Activated B cell treated with CpG ODN at 0.5 μM for 24 hours (primary cell): ENCODE measurements at regions of chr2 and their contacts with region 1.

Region 1: GRCh38 chr2:99489761-99490622 is at the start of gene REV1:
- DNase-seq: peak; percentile 96
- ATAC-seq: peak; percentile 87
- H3K4me3 Mint-ChIP-seq: peak within 1 kb of the TSS; percentile 96
- H3K27ac Mint-ChIP-seq: peak within 1 kb of the TSS; percentile 93
- H3K4me1 Mint-ChIP-seq: peaks cover 35% of the 10 kb centered on the region
- H3K27me3 Mint-ChIP-seq: no peaks in the 10 kb centered on the region
- CTCF ChIP-seq: no peak
- total RNA-seq, gene REV1: 44.5 and 52.1 TPM in 2 replicates

Region 2: GRCh38 chr2:97663965-97664635 is 1825.9 kb before region 1 on chr2 and contains the start of gene ACTR1B:
- CTCF ChIA-PET with region 1: no interaction called
- POLR2A ChIA-PET with region 1: no interaction called
- intact Hi-C with region 1: loop called (anchors 5 kb)
- DNase-seq: peak; percentile 93
- ATAC-seq: peak; percentile 89
- H3K4me3 Mint-ChIP-seq: peak within 1 kb of the TSS; percentile 92
- H3K27ac Mint-ChIP-seq: peak within 1 kb of the TSS; percentile 91
- H3K4me1 Mint-ChIP-seq: peaks cover 28% of the 10 kb centered on the region
- H3K27me3 Mint-ChIP-seq: no peaks in the 10 kb centered on the region
- CTCF ChIP-seq: no peak
- total RNA-seq, gene ACTR1B: 55.0 and 55.9 TPM in 2 replicates

Region 3: DNA sequence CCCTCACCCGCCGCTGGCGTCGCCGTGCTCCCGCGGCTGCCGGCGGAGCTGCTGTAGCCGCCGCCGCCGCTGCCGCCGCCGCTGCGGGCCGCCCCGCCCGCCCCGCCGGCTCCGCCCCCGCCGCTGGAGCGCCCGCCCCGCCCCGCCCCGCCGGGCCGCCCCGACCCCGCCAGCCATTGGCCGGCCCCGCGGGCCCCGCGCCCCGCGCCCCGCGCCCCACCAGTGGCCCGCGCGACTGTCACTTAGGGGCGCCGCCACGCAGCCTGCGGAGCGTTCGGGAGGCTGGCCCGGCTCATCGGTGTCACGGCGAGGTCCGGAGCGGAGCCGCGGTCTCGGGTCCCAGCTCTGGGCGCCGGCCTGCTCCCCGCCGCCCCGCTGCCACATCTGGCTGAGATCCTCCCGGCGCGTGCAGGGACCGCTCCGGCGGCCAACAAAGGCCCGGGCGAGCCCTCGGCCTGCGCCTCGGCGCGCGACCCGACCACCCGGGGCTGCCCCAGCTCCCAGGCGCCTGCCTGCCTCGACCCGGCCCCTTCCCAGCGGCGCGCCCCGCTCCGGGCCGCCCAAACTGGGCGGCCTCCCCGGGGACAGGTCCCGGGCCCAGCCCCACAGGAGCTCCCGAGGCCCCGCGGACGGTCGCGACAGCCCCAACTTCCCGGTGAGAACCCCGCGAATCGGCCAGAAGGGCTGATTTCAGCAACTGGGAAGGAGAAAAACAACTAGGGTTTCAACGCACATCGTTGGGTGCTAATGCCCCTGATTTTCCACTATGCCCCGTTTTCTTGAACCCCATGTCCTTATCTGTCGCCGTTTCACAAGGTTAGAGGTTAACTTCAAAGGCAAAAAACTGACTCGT is 758.7 kb before region 1 on chr2 and contains the start of gene MGAT4A:
- CTCF ChIA-PET with region 1: no interaction called
- POLR2A ChIA-PET with region 1: no interaction called
- intact Hi-C with region 1: loop called (anchors 5 kb)
- DNase-seq: peak; percentile 76
- ATAC-seq: peak; percentile 87
- H3K4me3 Mint-ChIP-seq: peak within 1 kb of the TSS; percentile 83
- H3K27ac Mint-ChIP-seq: peak within 1 kb of the TSS; percentile 84
- H3K4me1 Mint-ChIP-seq: peaks cover 56% of the 10 kb centered on the region
- H3K27me3 Mint-ChIP-seq: no peaks in the 10 kb centered on the region
- CTCF ChIP-seq: no peak
- total RNA-seq, gene MGAT4A: 12.6 and 15.7 TPM in 2 replicates

Region 4: GRCh38 chr2:99141110-99142108 is 348.6 kb before region 1 on chr2 and contains the start of gene C2orf15:
- CTCF ChIA-PET with region 1: no interaction called
- POLR2A ChIA-PET with region 1: interaction called, 3 read pairs
- intact Hi-C with region 1: loop called (anchors 1 kb)
- DNase-seq: peak; percentile 96
- ATAC-seq: peak; percentile 88
- H3K4me3 Mint-ChIP-seq: peak within 1 kb of the TSS; percentile 97
- H3K27ac Mint-ChIP-seq: peak within 1 kb of the TSS; percentile 96
- H3K4me1 Mint-ChIP-seq: peaks cover 26% of the 10 kb centered on the region
- H3K27me3 Mint-ChIP-seq: no peaks in the 10 kb centered on the region
- CTCF ChIP-seq: no peak
- total RNA-seq, gene C2orf15: 0.69 and 1.2 TPM in 2 replicates

Region 5: GRCh38 chr2:99180755-99181623 is 309.0 kb before region 1 on chr2 and contains the starts of genes MITD1 and MRPL30:
- CTCF ChIA-PET with region 1: no interaction called
- POLR2A ChIA-PET with region 1: interaction called, 3 read pairs
- intact Hi-C with region 1: loop called (anchors 1 kb)
- DNase-seq: peak; percentile 83
- ATAC-seq: peak; percentile 94
- H3K4me3 Mint-ChIP-seq: peak within 1 kb of the TSS; percentile 99
- H3K27ac Mint-ChIP-seq: peak within 1 kb of the TSS; percentile 95
- H3K4me1 Mint-ChIP-seq: peaks cover 63% of the 10 kb centered on the region
- H3K27me3 Mint-ChIP-seq: no peaks in the 10 kb centered on the region
- CTCF ChIP-seq: no peak
- total RNA-seq, gene MITD1: 54.1 and 59.8 TPM in 2 replicates
- total RNA-seq, gene MRPL30: 18.6 and 21.4 TPM in 2 replicates

Region 6: GRCh38 chr2:99442837-99443236 is 47.2 kb before region 1 on chr2:
- CTCF ChIA-PET with region 1: no interaction called
- POLR2A ChIA-PET with region 1: no interaction called
- intact Hi-C with region 1: loop called (anchors 2 kb)
- DNase-seq: no peak
- ATAC-seq: no peak
- H3K4me3 Mint-ChIP-seq: no peak overlapping the region
- H3K27ac Mint-ChIP-seq: no peak overlapping the region
- H3K4me1 Mint-ChIP-seq: no peaks in the 10 kb centered on the region
- H3K27me3 Mint-ChIP-seq: no peaks in the 10 kb centered on the region
- CTCF ChIP-seq: no peak

Region 7: DNA sequence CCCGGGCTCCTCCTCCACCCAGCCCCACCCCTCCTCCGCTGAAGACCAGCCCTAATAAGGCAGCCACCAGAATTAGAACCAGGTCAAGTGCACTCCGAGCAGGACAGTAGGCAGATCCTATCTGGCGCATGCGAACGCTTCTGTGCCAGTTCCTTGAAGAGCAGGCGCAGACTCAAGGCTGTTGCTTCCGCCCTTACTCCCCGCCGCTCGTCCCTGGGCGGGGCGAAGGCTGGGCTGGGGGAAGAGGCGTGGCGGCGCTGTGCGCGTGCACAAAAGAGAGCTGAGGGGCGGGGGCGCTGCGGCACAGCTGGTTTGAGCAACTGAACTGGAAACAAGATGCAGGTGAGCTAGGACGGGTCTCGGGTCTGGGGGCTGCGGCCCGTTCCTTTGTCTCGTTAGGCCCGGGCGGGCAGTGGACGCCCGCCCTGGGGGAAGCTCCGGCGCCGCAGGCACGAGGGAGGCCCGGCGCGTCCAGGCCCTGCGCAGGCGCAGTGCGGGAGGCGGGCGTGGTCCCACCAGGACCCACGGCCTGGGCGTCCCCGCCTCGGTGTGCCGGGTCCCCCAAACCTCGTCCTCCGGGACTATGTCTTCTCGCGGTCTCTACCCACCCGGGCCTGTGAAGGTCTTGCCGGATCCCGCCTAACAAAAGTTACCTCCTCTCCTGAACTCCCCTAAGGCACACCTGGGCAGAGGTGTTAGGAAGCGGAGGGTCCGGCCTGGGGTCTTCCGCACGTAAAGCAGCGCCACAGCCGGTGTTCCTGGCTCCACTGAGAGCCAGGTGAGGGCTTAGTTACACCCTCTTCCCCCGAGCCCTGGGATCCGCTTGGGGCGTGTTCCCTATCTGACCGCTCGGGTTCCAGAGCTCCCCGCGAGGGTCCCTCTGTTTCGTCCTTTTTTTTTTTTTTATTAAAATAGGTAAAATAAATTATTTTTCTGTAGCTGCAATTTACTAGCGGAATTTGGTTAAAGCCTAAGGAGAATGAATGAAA is 1073.0 kb after region 1 on chr2 and contains the start of gene PDCL3:
- CTCF ChIA-PET with region 1: no interaction called
- POLR2A ChIA-PET with region 1: no interaction called
- intact Hi-C with region 1: loop called (anchors 2 kb)
- DNase-seq: peak; percentile 98
- ATAC-seq: peak; percentile 89
- H3K4me3 Mint-ChIP-seq: peak within 1 kb of the TSS; percentile 90
- H3K27ac Mint-ChIP-seq: peak within 1 kb of the TSS; percentile 98
- H3K4me1 Mint-ChIP-seq: peaks cover 21% of the 10 kb centered on the region
- H3K27me3 Mint-ChIP-seq: no peaks in the 10 kb centered on the region
- CTCF ChIP-seq: no peak
- total RNA-seq, gene PDCL3: 26.1 and 27.8 TPM in 2 replicates